Activated CD4-positive, alpha-beta memory T cell treated with anti-CD3 and anti-CD28 coated beads for 36 hours (primary cell): ENCODE measurements at regions of chr1 and their contacts with region 1.

Region 1: DNA sequence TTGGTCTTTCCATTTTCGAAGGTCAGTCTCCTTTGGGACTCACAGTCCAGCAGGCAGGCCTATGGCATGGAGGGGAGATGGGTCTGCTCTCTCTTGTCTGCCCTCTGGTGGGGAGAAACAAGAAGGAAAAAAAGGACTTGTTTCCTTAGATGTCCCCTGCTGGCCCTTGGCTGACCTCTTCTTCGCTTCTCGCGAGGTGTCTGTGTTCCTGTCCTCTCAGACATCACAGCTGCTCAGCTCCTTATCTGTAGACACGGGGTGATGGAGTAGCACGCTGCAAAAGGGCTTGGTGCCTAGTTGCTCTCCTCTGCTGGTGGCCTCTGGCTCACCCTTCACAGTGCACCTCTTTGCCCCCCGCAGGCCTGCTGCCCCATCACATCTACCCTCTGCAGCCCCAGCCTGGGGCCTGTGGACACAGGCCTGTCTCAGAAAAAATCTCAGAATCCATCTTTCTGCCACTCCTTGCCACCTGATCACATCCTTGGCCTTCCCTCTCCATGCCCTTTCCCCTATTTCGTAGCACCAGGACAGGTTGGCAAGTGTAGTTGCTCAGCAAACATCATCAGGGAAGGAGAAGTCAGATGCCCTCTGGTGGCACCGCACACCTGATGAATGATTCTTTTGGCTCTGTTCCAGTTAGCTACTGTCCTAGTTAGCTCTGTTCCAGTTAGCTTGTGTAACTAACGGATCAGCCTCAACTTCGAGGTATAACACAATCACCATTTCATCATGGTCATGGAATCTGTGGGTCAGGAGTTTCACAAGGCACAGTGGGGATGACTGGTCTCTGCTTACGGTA is 18.7 kb upstream of the AK2 start:
- DNase-seq: peak; percentile 49
- H3K4me3 Mint-ChIP-seq: no peak overlapping the region
- H3K27ac Mint-ChIP-seq: no peak overlapping the region
- H3K4me1 Mint-ChIP-seq: peaks cover 3% of the 10 kb centered on the region
- H3K27me3 Mint-ChIP-seq: peaks cover 5% of the 10 kb centered on the region

Region 2: GRCh38 chr1:32939655-32940371 is 115.6 kb before region 1 on chr1:
- CTCF ChIA-PET with region 1: interaction called, 133 read pairs
- POLR2A ChIA-PET with region 1: interaction called, 3 read pairs
- intact Hi-C with region 1: no loop called
- DNase-seq: peak; percentile 65
- H3K4me3 Mint-ChIP-seq: no peak overlapping the region
- H3K27ac Mint-ChIP-seq: peak overlapping the region; percentile 72
- H3K4me1 Mint-ChIP-seq: peaks cover 43% of the 10 kb centered on the region
- H3K27me3 Mint-ChIP-seq: no peaks in the 10 kb centered on the region

Region 3: DNA sequence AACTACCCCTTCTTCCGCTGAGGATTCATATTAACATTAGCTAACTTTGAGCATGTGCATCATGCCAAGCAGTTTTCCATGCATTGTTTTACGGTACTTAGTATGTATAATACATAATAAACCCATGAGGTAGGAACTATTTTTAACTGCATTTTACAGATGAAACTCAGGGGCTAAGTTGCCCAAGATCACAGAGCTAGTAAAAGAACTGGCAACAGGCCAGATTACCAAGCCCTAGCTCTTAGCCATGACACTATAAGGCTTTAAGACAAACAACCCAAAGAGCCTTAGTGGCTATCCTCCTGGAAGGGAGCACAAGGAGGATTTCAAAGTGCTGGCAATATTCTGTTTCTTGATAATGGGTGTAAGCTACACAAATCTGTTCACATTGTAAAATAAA is 24.8 kb before region 1 on chr1:
- CTCF ChIA-PET with region 1: interaction called, 24 read pairs
- POLR2A ChIA-PET with region 1: no interaction called
- intact Hi-C with region 1: loop called (anchors 1 kb)
- DNase-seq: no peak
- H3K4me3 Mint-ChIP-seq: no peak overlapping the region
- H3K27ac Mint-ChIP-seq: no peak overlapping the region
- H3K4me1 Mint-ChIP-seq: peaks cover 70% of the 10 kb centered on the region
- H3K27me3 Mint-ChIP-seq: no peaks in the 10 kb centered on the region

Region 4: GRCh38 chr1:33152685-33153432 is 97.5 kb after region 1 on chr1:
- CTCF ChIA-PET with region 1: no interaction called
- POLR2A ChIA-PET with region 1: no interaction called
- intact Hi-C with region 1: no loop called
- DNase-seq: no peak
- H3K4me3 Mint-ChIP-seq: no peak overlapping the region
- H3K27ac Mint-ChIP-seq: no peak overlapping the region
- H3K4me1 Mint-ChIP-seq: no peaks in the 10 kb centered on the region
- H3K27me3 Mint-ChIP-seq: no peaks in the 10 kb centered on the region